HEK293 (cell line): ENCODE measurements at regions of chr12 and their contacts with region 1.

Region 1: GRCh38 chr12:2812290-2813213 is at the start of gene ITFG2:
- H3K4me3 ChIP-seq: peak within 1 kb of the TSS; percentile 91
- H3K27ac ChIP-seq: peak within 1 kb of the TSS; percentile 85
- H3K4me1 ChIP-seq: peaks cover 5% of the 10 kb centered on the region; the same call in 1 of the 2 replicates
- CTCF ChIP-seq: peak; percentile 35; the same call in 1 of the 2 replicates

Region 2: DNA sequence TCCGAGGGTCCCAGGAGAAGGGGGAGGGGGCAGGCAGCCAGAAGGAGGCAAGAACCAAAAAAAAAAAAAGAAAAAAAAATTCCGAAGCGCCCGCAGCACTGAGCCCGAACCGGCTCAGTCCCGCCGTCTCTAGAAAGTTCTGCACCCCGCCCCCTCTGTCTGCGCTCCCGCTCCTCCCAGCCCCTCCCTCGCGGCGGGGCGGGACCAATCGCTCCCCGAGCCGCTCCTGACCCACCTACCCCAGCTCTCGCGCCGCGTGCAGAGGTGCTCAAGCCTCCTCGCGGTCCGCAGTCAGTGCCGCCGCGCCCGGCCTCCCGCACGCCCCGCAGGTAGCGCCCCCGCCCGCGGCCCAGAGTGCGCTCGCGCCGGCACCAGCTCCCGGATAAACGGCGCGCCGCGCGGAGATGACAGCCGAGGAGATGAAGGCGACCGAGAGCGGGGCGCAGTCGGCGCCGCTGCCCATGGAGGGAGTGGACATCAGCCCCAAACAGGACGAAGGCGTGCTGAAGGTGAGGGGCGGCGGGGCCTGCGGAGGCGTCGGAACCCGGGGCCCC is 17.7 kb before region 1 on chr12 and contains the start of gene FKBP4:
- CTCF ChIA-PET with region 1: interaction called, 6 read pairs
- POLR2A ChIA-PET with region 1: interaction called, 11 read pairs
- H3K4me3 ChIP-seq: peak within 1 kb of the TSS; percentile 73
- H3K27ac ChIP-seq: peak within 1 kb of the TSS; percentile 88; the same call in 1 of the 2 replicates
- H3K4me1 ChIP-seq: peaks cover 3% of the 10 kb centered on the region; the same call in 1 of the 2 replicates
- CTCF ChIP-seq: no peak